Right ventricle myocardium superior (tissue), 1 donor: ENCODE measurements at regions of chr18 and their contacts with region 1.

Region 1: GRCh38 chr18:61901323-61901986 is 8.6 kb upstream of the RNF152 start:
- DNase-seq: no peak
- ATAC-seq: peak; percentile 89

Region 2: GRCh38 chr18:61551586-61551985 is 349.9 kb before region 1 on chr18:
- intact Hi-C with region 1: loop called (anchors 10 kb)
- DNase-seq: no peak
- ATAC-seq: peak; percentile 85